Sigmoid colon (tissue), 7 donors: ENCODE measurements at regions of chr6 and their contacts with region 1.

Region 1: DNA sequence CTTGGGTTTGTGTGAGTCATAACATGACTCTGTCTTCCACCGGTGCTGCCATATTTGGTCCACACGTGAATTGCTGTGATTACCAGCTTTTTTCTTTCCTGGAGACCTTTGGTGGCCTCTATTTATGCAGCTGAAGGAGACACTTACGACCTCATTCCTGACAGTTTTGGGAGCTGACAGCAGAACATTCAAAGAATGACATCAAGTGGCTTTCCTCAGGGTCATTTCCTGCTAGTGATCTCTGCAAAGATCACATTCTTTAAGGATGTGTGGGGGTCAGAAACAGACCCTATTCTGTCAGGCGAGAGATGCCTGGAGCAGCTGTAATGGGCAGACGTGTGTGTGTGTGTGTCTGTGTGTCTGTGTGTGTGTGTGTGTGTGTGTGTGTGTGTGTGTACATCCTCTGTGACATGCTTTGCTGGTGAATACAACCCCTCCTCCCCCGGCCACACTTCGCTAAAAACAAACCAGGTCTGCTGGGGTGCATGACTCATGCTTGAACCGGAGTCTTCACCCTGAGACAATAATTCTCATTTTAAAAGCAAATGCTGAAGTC is 115.6 kb downstream of the TMEM170B start:
- DNase-seq: no peak
- H3K4me3 ChIP-seq: no peak overlapping the region
- H3K27ac ChIP-seq: peak overlapping the region in 2 of 4 donors; percentile 5 to 18
- H3K4me1 ChIP-seq: peaks cover 0 to 37% (median 19%) of the 10 kb centered on the region in 4 donors
- H3K27me3 ChIP-seq: no peaks in the 10 kb centered on the region
- CTCF ChIP-seq: no peak
- EP300 ChIP-seq: no peak
- POLR2A ChIP-seq: no peak

Region 2: DNA sequence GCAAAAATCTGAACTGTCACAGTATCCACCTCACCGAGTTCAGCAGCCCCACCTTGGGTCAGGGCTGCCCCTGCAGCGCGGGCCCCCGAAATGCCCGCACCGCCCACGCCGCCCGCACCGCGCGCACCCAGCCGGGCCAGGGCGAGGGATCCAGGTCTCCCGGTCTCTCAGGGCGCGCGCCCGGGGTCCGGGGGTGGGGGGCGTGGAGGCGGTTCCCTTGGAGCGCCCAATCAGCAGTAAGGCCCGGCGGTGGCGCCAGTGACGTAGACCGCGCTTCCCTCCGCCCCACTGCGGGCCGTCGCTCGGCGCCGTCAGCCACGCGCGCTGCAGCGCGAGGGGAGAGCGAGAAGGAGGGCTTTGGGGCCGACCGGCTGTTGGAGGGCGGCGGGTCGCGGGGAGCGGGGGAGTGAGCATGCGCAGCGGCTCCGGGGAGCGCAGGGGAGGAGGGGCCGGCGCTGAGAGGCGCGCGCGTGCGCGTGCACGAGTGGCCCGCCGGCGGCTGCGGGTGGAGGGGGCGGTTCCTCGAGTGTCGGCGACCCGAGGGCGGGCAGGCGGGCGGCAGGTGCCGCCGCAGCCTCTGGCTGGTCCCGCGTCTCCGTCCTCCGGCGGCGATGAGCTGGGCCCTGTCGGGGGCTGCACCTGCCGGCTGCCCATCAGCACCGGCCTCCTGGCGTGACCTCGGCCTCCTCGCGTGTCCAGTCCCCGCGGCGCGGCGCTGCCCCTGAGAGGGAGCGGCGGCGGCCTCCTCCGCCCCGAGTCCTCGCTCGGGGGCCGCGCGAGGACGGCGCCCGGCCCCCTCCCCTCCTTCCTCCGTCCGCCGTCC is 115.7 kb before region 1 on chr6 and contains the start of gene TMEM170B:
- intact Hi-C with region 1: no loop called
- DNase-seq: peak; percentile 97
- H3K4me3 ChIP-seq: peak within 1 kb of the TSS; percentile 88 to 99 (median 96)
- H3K27ac ChIP-seq: peak within 1 kb of the TSS; percentile 86 to 93 (median 90)
- H3K4me1 ChIP-seq: peaks cover 0 to 26% (median 12%) of the 10 kb centered on the region in 4 donors
- H3K27me3 ChIP-seq: no peaks in the 10 kb centered on the region
- CTCF ChIP-seq: no peak
- EP300 ChIP-seq: no peak
- POLR2A ChIP-seq: peak; percentile 26 to 41
- total RNA-seq, gene TMEM170B: 8.7 to 11.0 (median 10.4) TPM

Region 3: DNA sequence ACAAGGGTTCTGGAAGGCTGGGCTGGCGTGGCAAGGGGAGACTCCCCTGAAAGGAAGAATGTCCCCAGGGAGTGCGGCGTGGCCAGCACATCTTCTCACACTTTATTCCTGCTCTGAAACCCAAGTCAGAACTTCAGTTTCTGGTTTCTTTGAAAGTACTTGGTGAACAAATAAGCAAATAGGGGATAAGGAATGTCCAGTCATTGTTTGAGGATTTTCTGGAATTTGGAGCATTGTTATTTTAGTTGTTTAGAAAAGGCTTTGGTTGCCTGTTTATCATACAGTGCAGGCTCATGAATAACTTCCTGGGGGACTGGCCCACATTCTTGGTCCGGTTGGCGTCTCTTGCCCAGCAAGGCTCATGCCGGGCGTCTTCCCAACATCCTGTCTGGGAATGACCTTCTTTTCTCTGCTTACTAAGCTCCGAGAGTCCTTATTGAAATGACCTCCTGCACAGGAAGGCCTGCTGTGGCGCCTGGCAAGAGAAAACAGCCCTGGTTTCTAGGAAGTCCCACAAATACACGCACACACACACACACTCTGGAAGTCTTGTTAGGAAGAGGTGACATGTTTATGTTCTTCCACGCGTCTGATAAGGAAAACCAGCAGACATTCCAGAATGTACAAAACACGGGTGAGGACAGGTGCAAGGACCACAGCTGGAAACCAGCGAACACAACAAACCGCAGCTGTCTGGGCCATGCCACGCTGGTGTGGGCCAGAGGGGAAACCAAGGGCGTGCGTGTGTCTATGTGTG is 43.6 kb before region 1 on chr6:
- intact Hi-C with region 1: loop called (anchors 5 kb)
- DNase-seq: no peak
- H3K4me3 ChIP-seq: no peak overlapping the region
- H3K27ac ChIP-seq: peak overlapping the region in 2 of 4 donors; percentile 20 to 60
- H3K4me1 ChIP-seq: peaks cover 0 to 39% (median 27%) of the 10 kb centered on the region in 4 donors
- H3K27me3 ChIP-seq: no peaks in the 10 kb centered on the region
- CTCF ChIP-seq: no peak
- EP300 ChIP-seq: peak in 1 of 4 donors; percentile 22
- POLR2A ChIP-seq: no peak

Region 4: GRCh38 chr6:11779329-11780096 is 126.4 kb after region 1 on chr6:
- intact Hi-C with region 1: no loop called
- DNase-seq: no peak
- H3K4me3 ChIP-seq: no peak overlapping the region
- H3K27ac ChIP-seq: peak overlapping the region in 1 of 4 donors; percentile 2
- H3K4me1 ChIP-seq: no peaks in the 10 kb centered on the region
- H3K27me3 ChIP-seq: no peaks in the 10 kb centered on the region
- CTCF ChIP-seq: no peak
- EP300 ChIP-seq: no peak
- POLR2A ChIP-seq: no peak

Region 5: GRCh38 chr6:12233693-12234571 is 580.8 kb after region 1 on chr6:
- intact Hi-C with region 1: loop called (anchors 2 kb)
- DNase-seq: no peak
- H3K4me3 ChIP-seq: no peak overlapping the region
- H3K27ac ChIP-seq: peak overlapping the region in 3 of 4 donors; percentile 43 to 60 (median 54)
- H3K4me1 ChIP-seq: peaks cover 0 to 17% (median 11%) of the 10 kb centered on the region in 4 donors
- H3K27me3 ChIP-seq: no peaks in the 10 kb centered on the region
- CTCF ChIP-seq: peak; percentile 61 to 86 (median 68)
- EP300 ChIP-seq: no peak
- POLR2A ChIP-seq: no peak

Region 6: GRCh38 chr6:12605888-12606345 is 952.8 kb after region 1 on chr6:
- intact Hi-C with region 1: loop called (anchors 2 kb)
- DNase-seq: no peak
- H3K4me3 ChIP-seq: no peak overlapping the region
- H3K27ac ChIP-seq: no peak overlapping the region
- H3K4me1 ChIP-seq: peaks cover 0 to 14% (median 4%) of the 10 kb centered on the region in 4 donors
- H3K27me3 ChIP-seq: no peaks in the 10 kb centered on the region
- CTCF ChIP-seq: peak in 3 of 4 experiments; percentile 52 to 72 (median 66)
- EP300 ChIP-seq: no peak
- POLR2A ChIP-seq: no peak